ENCODE measurements at regions of chr3 and their contacts with region 1.

Region 1: DNA sequence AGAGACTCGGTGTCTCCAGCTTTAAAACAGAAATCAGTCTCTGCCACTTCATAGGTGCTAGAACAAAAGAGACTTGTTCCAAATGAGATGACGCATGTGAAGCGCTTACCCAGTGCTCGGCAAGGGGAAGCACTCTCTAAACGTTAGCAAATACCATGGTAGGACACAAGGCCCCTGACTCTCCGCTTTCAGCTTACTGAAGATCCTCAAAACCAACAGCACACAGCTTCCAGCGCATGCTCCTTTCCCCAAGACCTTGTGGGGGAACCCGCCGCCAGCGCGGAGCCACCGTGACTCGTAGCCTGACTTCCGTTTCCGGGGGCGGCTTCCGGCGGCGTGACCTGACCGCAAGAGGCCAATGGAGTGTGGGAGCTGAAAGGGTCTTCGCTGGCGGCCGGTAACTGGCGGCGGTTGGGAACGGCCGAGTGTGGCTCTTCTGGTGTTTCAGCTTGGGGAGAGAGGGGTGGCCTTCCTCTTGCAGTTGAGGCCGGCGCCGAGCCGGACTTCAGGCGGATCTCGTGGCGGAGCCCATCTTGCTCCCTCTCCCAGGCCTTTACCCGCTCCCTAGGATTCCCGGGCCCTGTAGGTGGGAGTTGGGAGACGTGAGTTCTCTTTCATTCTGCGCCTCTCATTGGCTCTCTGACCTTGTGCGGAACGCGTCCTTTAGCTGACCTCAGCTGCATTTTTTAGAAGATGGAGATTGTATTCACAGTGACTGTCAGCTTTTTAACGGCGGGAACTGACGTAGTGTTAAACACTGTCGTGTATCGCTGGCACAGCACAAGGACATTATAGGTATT is at the start of gene THUMPD3:
- DNase-seq: peak; percentile 86

Region 2: GRCh38 chr3:9373465-9373864 is 10.5 kb after region 1 on chr3:
- CTCF ChIA-PET with region 1: no interaction called
- POLR2A ChIA-PET with region 1: interaction called, 27 read pairs
- DNase-seq: no peak

Region 3: DNA sequence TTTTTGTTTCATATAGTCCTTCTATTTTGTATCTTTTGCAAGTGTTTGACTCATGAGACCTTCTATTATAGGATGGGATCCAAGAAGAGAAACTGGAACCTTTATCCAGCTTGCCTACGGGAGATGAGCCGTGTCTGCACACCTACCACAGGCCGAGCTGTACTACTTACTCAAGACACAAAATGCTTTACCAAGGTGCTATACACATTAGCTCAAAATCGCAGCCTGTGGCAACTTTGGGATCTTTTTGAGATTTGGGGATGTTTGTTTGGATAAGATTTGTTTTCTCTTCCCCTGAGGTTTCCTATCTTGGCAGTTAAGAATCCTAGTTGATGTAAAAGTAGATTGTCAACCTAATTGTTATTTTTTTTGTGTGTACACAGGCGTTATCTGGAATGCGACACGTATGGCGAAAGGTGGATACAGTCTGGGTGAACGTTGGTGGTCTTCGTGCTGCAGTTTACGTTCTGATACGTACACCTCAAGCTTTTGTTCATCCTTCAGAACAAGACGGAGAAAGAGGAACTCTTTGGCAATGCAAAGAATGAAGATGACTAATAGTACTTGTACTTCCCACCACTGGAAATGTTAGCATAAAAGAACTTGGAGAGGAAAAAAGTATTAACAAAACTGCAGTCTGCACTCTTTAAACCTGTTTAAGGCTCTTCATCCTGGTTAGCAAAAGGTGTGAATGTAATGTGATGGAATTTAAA is 21.4 kb after region 1 on chr3:
- CTCF ChIA-PET with region 1: interaction called, 3 read pairs
- POLR2A ChIA-PET with region 1: interaction called, 25 read pairs
- DNase-seq: no peak

Region 4: GRCh38 chr3:9396700-9397521 is 34.0 kb after region 1 on chr3:
- CTCF ChIA-PET with region 1: interaction called, 3 read pairs
- POLR2A ChIA-PET with region 1: interaction called, 45 read pairs
- DNase-seq: peak; percentile 83

Region 5: GRCh38 chr3:9402410-9403228 is 39.7 kb after region 1 on chr3:
- CTCF ChIA-PET with region 1: interaction called, 3 read pairs
- POLR2A ChIA-PET with region 1: interaction called, 45 read pairs
- DNase-seq: peak; percentile 48

Region 6: GRCh38 chr3:9422712-9423424 is 59.9 kb after region 1 on chr3:
- CTCF ChIA-PET with region 1: no interaction called
- POLR2A ChIA-PET with region 1: interaction called, 12 read pairs
- DNase-seq: peak; percentile 49

Region 7: DNA sequence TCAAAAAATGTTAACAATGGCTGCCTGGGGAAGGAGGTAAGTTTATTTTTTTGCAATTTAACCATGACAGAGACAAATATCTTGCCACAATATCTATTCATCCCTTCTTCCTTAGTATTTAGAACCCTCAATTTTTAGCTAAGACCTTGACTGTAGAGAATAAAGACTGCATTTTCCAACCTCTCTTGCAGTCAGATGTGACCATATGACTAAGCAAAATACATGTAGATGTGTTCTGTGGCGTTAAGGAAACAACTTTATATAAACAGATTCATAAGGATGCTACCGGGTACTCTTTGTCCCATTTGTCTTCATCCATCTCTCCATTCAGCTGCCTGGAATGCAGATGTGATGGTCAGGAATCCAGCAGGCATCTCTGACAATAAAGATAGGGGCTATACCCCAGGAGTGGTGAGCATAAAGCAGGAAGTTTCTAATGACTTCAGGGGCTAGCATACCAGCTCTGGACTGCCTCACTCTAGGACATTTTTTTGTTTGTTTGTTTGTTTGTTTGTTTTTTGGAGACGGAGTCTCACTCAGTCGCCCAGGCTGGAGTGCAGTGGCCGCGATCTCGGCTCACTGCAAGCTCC is 149.6 kb after region 1 on chr3:
- CTCF ChIA-PET with region 1: no interaction called
- POLR2A ChIA-PET with region 1: no interaction called
- DNase-seq: no peak

Measured in HEK293T (cell line).